PC-3 (cell line): ENCODE measurements at regions of chr1 and their contacts with region 1.

Region 1: DNA sequence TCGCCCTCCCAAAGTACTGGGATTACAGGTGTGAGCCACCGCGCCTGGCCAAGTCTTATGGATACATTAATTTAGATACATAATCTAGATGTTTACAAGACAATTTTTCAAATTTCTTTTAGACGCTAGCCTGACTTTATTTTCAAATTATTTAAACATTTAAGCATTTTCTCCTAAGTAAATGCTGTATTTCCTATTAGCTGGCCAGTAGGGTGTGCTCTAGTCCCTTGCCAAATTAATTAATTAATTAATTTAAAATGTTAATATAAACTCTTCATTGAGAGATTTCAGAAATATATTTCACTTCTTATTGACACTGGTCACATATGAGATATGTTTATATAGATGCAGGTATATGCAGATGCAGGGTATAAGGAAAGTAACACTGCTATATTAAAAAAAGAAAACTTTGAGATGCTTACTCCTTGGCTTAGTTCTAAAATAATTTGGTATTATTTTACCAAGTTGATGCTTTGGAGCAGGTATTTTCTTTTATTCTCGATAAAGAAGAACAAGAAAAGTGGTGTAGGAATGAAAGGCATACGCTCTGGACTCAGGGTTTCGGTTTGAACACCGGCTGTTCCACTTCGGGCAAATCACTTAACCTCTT is 5.2 kb upstream of the ERRFI1 start:
- DNase-seq: peak; percentile 76
- ATAC-seq: no peak
- H3K4me3 ChIP-seq: no peak overlapping the region
- H3K27ac ChIP-seq: peak overlapping the region; percentile 70
- H3K4me1 ChIP-seq: peaks cover 36% of the 10 kb centered on the region
- H3K27me3 ChIP-seq: no peaks in the 10 kb centered on the region
- CTCF ChIP-seq: peak; percentile 61

Region 2: DNA sequence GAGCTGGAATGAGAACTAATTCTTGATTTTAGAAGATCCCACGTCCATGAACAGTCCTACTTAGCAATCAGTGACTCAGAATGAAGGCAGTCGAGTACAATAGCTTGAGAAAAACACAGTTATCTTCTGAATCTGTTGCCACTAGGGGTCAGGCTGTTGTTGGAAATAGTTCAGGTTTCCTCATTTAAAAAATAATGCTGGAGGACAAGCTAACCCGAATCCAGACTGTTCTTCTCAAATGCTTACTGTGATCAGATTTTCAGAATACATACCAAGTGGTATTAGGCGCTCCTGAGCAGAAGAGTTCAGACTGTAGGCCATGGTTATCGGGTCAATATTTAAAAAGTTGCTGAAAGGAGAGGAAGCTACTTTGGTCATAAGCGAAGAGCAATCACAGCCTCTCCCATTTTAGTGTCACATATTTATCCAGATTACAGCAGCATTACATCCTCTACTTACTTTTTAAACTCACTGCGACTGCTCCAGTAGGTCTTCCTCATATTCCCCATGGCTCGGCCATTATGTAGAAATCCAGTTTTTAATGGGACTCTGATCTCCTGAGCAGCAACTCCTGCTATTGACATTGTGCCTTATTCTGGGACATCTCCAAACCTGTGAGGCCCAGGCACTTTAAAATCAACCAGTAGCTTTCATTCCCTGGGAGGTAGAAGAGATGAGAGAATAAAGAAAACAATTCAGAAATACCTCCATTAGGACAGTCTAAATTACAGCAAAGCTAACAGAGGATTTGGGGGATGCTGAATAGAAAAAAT is 16.1 kb before region 1 on chr1:
- CTCF ChIA-PET with region 1: interaction called, 7 read pairs
- POLR2A ChIA-PET with region 1: interaction called, 18 read pairs
- intact Hi-C with region 1: no loop called
- DNase-seq: peak; percentile 91
- ATAC-seq: peak; percentile 12; the same call in 1 of the 2 replicates
- H3K4me3 ChIP-seq: peak overlapping the region; percentile 8; the same call in 1 of the 2 replicates
- H3K27ac ChIP-seq: peak overlapping the region; percentile 39
- H3K4me1 ChIP-seq: peaks cover 51% of the 10 kb centered on the region
- H3K27me3 ChIP-seq: no peaks in the 10 kb centered on the region
- CTCF ChIP-seq: peak; percentile 71

Region 3: GRCh38 chr1:8077120-8077573 is 45.9 kb after region 1 on chr1:
- CTCF ChIA-PET with region 1: no interaction called
- POLR2A ChIA-PET with region 1: interaction called, 3 read pairs
- intact Hi-C with region 1: loop called (anchors 1 kb)
- DNase-seq: peak; percentile 89
- ATAC-seq: peak; percentile 93
- H3K4me3 ChIP-seq: no peak overlapping the region
- H3K27ac ChIP-seq: peak overlapping the region; percentile 97
- H3K4me1 ChIP-seq: peaks cover 39% of the 10 kb centered on the region
- H3K27me3 ChIP-seq: no peaks in the 10 kb centered on the region
- CTCF ChIP-seq: no peak

Region 4: GRCh38 chr1:8211589-8212442 is 180.5 kb after region 1 on chr1:
- CTCF ChIA-PET with region 1: no interaction called
- POLR2A ChIA-PET with region 1: interaction called, 13 read pairs
- intact Hi-C with region 1: no loop called
- DNase-seq: peak; percentile 98
- ATAC-seq: peak; percentile 83
- H3K4me3 ChIP-seq: peak overlapping the region; percentile 22; the same call in 1 of the 2 replicates
- H3K27ac ChIP-seq: peak overlapping the region; percentile 98
- H3K4me1 ChIP-seq: peaks cover 33% of the 10 kb centered on the region
- H3K27me3 ChIP-seq: no peaks in the 10 kb centered on the region
- CTCF ChIP-seq: no peak

Region 5: GRCh38 chr1:8259498-8260290 is 228.4 kb after region 1 on chr1:
- CTCF ChIA-PET with region 1: interaction called, 4 read pairs
- POLR2A ChIA-PET with region 1: no interaction called
- intact Hi-C with region 1: loop called (anchors 1 kb)
- DNase-seq: peak; percentile 86
- ATAC-seq: peak; percentile 42
- H3K4me3 ChIP-seq: peak overlapping the region; percentile 56
- H3K27ac ChIP-seq: peak overlapping the region; percentile 97
- H3K4me1 ChIP-seq: peaks cover 30% of the 10 kb centered on the region
- H3K27me3 ChIP-seq: no peaks in the 10 kb centered on the region
- CTCF ChIP-seq: no peak